ENCODE measurements at regions of chr19 and their contacts with region 1.

Region 1: DNA sequence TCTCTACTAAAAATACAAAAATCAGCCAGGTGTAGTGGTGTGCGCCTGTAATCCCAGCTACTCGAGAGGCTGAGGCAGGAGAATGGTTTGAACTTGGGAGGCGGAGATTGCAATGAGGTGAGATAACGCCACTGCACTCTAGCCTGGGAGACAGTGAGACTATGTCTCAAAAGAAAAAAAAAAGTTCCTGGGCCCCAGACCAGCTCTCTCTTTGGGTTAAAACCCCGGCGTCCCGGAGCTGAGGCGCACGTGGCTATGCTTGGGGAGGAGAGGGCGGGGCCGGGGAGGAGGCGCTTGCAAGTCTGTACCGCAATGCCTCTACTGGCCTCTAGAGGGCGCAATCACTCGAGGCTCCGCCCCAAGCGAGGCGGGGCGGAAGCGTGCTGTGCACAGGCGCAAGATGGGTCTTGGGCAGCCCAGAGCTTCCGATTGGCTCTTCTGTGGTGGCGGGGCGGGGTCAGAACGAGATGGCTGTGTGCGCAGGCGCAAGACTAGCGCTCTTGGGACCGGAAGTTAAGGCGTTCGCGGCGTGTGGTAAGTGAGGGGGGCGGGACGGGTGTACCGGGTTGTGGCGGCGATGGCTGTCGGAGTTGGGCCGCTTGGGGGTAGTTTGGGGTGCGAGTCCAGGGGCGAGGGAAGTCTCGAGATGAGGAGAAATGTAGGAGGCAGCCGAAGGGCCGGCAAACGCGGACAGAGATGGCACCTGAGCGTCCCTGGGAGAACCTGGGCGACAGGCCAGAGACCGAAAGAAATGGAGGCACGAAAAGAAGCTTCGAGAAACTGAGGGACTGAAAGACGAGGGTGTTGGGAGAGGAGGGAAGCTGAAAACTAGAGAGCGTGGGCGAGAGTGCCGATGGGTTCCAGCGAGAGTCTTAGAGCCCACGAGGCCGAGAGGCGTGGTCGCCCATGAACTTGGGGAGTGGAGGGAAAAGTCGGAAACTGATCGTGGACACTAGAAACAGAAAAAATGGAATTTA is at the start of gene DHX34:
- H3K4me3 ChIP-seq: peak within 1 kb of the TSS; percentile 53
- H3K27ac ChIP-seq: peak within 1 kb of the TSS; percentile 59; the same call in 1 of the 2 replicates
- H3K4me1 ChIP-seq: peaks cover 11% of the 10 kb centered on the region
- CTCF ChIP-seq: peak; percentile 97

Region 2: GRCh38 chr19:47130591-47131227 is 218.4 kb before region 1 on chr19 and contains the start of gene SAE1:
- CTCF ChIA-PET with region 1: no interaction called
- POLR2A ChIA-PET with region 1: no interaction called
- H3K4me3 ChIP-seq: peak within 1 kb of the TSS; percentile 75
- H3K27ac ChIP-seq: peak within 1 kb of the TSS; percentile 92
- H3K4me1 ChIP-seq: peaks cover 22% of the 10 kb centered on the region
- CTCF ChIP-seq: peak; percentile 97

Region 3: GRCh38 chr19:47296036-47296435 is 53.1 kb before region 1 on chr19:
- CTCF ChIA-PET with region 1: interaction called, 26 read pairs
- POLR2A ChIA-PET with region 1: interaction called, 3 read pairs
- H3K4me3 ChIP-seq: no peak overlapping the region
- H3K27ac ChIP-seq: no peak overlapping the region
- H3K4me1 ChIP-seq: no peaks in the 10 kb centered on the region
- CTCF ChIP-seq: peak; percentile 70

Region 4: GRCh38 chr19:47315125-47315821 is 33.8 kb before region 1 on chr19:
- CTCF ChIA-PET with region 1: interaction called, 16 read pairs
- POLR2A ChIA-PET with region 1: interaction called, 5 read pairs
- H3K4me3 ChIP-seq: no peak overlapping the region
- H3K27ac ChIP-seq: no peak overlapping the region
- H3K4me1 ChIP-seq: 0 out of 2 replicates have a peak, but pooled peaks cover 3% of the 10 kb centered on the region
- CTCF ChIP-seq: no peak

Region 5: DNA sequence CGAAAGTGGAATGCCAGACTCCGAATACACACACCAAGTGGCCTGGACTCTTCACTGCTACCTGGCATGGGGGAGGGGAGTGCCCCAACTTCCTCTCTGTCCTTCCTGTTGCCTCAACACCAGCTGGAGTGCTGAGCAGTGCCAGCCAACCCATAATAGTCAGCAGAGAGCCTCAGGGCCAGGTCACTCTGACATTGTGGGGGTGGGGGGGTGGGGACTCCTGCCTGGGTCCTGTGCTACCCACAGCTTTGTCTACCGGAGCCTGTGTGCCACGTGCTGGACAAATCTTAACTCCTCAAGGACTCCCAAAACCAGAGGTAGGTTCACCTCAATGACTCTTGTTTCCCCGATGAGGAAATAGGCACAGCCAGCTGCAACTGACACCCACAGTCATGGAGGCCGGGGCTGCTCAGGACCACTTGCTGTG is 12.2 kb before region 1 on chr19:
- CTCF ChIA-PET with region 1: interaction called, 36 read pairs
- POLR2A ChIA-PET with region 1: interaction called, 8 read pairs
- H3K4me3 ChIP-seq: no peak overlapping the region
- H3K27ac ChIP-seq: no peak overlapping the region
- H3K4me1 ChIP-seq: no peaks in the 10 kb centered on the region
- CTCF ChIP-seq: no peak

Region 6: DNA sequence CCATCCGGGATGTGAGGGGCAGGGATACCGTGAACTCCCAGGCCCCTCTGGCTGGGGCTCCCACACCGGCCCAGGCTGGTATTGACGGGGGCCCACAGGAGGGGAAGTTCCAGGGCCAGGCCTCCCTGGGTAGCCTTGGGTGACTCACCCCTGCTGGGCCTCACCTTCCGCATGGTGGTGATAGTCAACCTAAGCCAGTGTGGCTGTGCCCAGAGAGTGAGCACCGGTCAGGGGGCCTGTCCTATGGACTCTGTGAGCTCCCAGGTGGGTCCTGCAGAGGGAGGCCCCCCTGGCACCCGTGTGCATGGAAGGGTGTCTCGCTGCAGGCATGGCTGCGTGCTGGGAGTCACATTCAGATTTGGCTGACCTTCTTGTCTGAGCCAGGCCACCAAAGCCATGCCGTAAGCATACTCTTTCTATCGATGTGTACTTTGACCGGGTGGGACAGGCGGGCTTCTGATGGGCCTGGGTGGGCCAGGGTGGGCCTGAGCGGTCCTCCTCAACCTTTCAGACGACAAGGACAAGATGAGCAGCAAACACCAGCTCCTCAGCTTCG is 27.6 kb after region 1 on chr19:
- CTCF ChIA-PET with region 1: interaction called, 22 read pairs
- POLR2A ChIA-PET with region 1: interaction called, 4 read pairs
- H3K4me3 ChIP-seq: no peak overlapping the region
- H3K27ac ChIP-seq: no peak overlapping the region
- H3K4me1 ChIP-seq: no peaks in the 10 kb centered on the region
- CTCF ChIP-seq: no peak

Region 7: DNA sequence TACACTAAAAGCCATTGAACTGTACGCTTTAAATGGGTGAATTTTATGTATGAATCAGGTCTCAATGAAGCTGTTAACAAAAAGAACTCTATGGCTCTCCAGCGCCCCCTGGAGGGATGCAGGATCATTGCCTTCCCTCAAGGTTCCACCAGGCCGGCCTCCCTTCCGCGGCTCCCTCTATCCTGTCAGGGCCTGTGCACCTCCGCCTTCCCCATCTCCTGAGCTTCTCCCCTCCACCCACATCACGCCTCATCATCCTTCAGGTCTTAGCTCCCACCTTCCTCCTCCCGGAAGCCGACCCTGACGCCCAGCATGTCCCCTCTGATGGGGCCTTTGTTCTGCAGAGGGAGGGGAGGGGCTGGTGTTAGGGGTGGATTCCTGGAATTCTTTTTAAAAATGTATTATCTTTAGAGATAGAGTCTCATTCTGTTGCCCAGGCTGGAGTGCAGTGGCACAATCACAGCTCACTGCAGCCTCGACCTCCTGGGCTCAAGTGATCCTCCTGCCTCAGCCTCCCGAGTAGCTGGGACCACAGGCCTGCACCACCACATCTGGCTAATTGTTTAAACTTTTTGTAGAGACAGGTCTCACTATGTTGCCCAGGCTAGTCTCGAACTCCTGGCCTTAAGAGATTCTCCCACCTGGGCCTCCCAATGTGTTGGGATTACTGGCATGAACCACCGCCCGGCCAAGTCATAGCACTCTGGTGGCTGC is 42.6 kb after region 1 on chr19:
- CTCF ChIA-PET with region 1: interaction called, 34 read pairs
- POLR2A ChIA-PET with region 1: interaction called, 4 read pairs
- H3K4me3 ChIP-seq: no peak overlapping the region
- H3K27ac ChIP-seq: no peak overlapping the region
- H3K4me1 ChIP-seq: no peaks in the 10 kb centered on the region
- CTCF ChIP-seq: peak; percentile 60; the same call in 1 of the 2 replicates

Region 8: GRCh38 chr19:47573071-47574026 is 224.2 kb after region 1 on chr19 and contains the start of gene ZNF541:
- CTCF ChIA-PET with region 1: interaction called, 10 read pairs
- POLR2A ChIA-PET with region 1: no interaction called
- H3K4me3 ChIP-seq: no peak within 1 kb of the TSS
- H3K27ac ChIP-seq: no peak within 1 kb of the TSS
- H3K4me1 ChIP-seq: no peaks in the 10 kb centered on the region
- CTCF ChIP-seq: no peak

Region 9: GRCh38 chr19:47587295-47587694 is 238.2 kb after region 1 on chr19:
- CTCF ChIA-PET with region 1: no interaction called
- POLR2A ChIA-PET with region 1: no interaction called
- H3K4me3 ChIP-seq: no peak overlapping the region
- H3K27ac ChIP-seq: no peak overlapping the region
- H3K4me1 ChIP-seq: peaks cover 6% of the 10 kb centered on the region
- CTCF ChIP-seq: no peak

Measured in HEK293 (cell line).